Activated B cell treated with CpG ODN at 0.5 μM for 24 hours (primary cell): ENCODE measurements at regions of chr3 and their contacts with region 1.

Region 1: DNA sequence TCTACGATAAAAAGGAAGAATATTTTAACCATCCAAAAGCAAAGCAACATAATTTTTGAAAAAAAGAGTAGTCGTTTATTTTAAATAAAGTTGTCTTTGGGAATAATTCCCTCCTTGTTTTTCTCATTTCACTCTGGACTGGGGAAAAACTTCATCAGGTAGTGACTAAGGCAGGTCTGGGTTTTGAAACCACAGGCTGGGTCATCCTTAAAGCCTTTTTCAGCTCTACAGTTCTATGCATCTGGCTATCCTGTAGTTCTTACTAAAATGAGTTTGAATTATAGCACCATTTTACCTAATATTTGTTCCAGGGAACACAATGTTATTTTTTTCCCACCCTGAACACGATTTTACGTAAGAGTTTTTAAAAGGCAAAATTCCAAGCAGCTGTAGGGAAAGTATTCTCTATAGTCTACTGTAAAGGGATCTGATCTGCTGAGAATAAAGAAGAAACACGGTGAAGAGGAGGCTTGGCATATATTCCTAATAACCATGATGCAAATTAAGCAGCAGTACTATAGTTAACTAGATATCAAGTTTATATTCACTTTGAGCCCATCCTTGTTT is 107.7 kb downstream of the OSBPL10 start:
- DNase-seq: no peak
- ATAC-seq: no peak
- H3K4me3 Mint-ChIP-seq: no peak overlapping the region
- H3K27ac Mint-ChIP-seq: peak overlapping the region; percentile 1
- H3K4me1 Mint-ChIP-seq: peaks cover 34% of the 10 kb centered on the region
- H3K27me3 Mint-ChIP-seq: no peaks in the 10 kb centered on the region
- CTCF ChIP-seq: no peak

Region 2: GRCh38 chr3:31858439-31858838 is 14.9 kb before region 1 on chr3:
- CTCF ChIA-PET with region 1: no interaction called
- POLR2A ChIA-PET with region 1: no interaction called
- intact Hi-C with region 1: loop called (anchors 2 kb)
- DNase-seq: no peak
- ATAC-seq: peak; percentile 69
- H3K4me3 Mint-ChIP-seq: no peak overlapping the region
- H3K27ac Mint-ChIP-seq: peak overlapping the region; percentile 71
- H3K4me1 Mint-ChIP-seq: peaks cover 74% of the 10 kb centered on the region
- H3K27me3 Mint-ChIP-seq: no peaks in the 10 kb centered on the region
- CTCF ChIP-seq: no peak